ENCODE measurements at regions of chr19 and their contacts with region 1.

Region 1: DNA sequence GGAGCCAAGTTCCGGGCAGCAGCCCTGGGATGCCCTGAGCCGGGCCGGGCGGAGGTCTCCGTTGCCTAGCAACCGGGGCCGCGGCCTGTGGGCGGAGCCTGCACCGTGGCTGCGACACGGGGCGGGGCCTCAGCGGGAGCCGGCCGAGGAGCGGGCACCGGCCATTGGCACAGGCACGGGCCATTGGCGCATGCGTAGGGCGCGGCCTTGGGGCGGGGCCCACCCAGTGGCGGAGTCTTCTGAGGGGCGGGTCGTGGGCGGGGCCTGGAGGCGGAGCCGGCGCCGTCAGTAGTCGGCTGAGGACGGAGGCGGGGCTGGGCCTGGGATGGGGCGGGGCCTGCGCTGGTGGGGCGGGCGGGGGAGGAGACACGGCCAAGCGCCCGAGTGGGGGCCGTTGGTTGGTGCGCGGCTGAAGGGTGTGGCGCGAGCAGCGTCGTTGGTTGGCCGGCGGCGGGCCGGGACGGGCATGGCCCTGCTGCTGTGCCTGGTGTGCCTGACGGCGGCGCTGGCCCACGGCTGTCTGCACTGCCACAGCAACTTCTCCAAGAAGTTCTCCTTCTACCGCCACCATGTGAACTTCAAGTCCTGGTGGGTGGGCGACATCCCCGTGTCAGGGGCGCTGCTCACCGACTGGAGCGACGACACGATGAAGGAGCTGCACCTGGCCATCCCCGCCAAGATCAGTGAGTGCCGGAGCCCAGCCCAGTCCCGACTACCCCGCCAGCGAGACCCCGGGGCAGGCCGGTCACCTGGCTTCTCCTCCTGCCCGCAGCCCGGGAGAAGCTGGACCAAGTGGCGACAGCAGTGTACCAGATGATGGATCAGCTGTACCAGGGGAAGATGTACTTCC is at the start of gene IZUMO4:
- DNase-seq: peak; percentile 100
- ATAC-seq: peak; percentile 85
- H3K4me3 Mint-ChIP-seq: peak within 1 kb of the TSS; percentile 98
- H3K27ac Mint-ChIP-seq: peak within 1 kb of the TSS; percentile 94
- H3K4me1 Mint-ChIP-seq: peaks cover 35% of the 10 kb centered on the region
- H3K27me3 Mint-ChIP-seq: no peaks in the 10 kb centered on the region
- total RNA-seq, gene IZUMO4: 15.2 to 16.6 TPM

Region 2: DNA sequence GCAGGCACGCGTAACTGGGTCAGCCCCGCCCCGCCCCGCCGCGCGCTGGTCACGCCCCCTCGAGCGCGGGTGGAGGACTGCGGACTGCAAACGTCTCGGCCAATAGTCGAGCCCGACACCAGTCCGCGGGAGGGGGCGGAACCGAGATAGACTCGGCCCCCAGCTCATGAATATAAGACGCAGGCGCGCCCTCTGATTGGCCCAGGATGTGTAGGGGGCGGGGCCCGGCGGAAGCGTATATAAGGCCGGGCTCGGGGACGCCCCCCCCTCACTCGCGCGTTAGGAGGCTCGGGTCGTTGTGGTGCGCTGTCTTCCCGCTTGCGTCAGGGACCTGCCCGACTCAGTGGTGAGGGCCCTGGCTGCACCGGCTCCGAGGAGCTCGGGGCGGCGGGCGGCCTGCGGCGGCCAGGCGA is 827.6 kb before region 1 on chr19 and contains the start of gene CIRBP:
- CTCF ChIA-PET with region 1: no interaction called
- POLR2A ChIA-PET with region 1: no interaction called
- intact Hi-C with region 1: loop called in 1 of 2 experiments (anchors 10 kb)
- DNase-seq: peak; percentile 100
- ATAC-seq: peak; percentile 87
- H3K4me3 Mint-ChIP-seq: peak within 1 kb of the TSS; percentile 84
- H3K27ac Mint-ChIP-seq: peak within 1 kb of the TSS; percentile 87
- H3K4me1 Mint-ChIP-seq: peaks cover 66% of the 10 kb centered on the region
- H3K27me3 Mint-ChIP-seq: no peaks in the 10 kb centered on the region
- total RNA-seq, gene CIRBP: 123 to 188 TPM

Region 3: DNA sequence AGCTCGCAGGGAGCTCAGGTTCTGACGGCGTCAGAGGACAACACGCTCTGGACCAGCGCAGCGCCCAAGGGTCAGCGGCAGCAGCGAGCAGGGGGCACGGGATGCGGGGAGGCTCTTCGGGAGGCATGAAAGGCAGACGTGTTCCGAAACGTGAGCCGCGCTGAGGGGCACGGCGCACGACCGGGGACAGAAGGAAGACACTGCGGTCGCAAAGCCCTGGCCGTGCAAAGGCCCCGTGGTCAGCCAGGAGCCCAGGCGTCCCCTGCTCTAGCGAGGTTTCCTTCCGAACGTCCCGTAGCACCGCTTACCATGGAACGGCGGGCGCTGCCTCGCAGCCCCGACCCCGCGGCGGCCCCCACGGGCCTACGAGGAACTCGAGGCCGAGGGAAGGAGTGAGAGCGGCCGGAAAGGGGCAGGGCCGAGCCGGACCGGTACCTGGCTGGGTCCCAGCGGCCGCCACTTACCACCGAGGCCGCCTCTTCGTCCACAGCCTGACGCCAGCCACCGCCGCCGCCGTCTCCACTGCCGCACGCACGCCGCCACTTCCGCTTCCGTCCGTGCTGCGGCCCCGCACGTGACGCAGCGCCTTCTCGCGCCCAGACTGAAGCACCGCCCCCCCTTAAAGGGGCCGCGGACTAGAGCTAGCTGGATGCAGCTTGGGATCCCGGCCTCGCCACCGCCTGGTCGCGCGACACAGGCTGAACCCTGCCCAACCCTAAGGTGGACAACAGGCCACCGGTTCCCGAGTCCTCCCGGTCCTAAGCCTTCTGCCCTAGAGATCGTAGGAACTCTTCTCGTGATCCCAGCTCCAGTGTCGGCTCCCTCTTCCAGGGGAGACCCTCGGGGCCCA is 220.8 kb before region 1 on chr19:
- CTCF ChIA-PET with region 1: no interaction called
- POLR2A ChIA-PET with region 1: no interaction called
- intact Hi-C with region 1: loop called in 1 of 2 experiments (anchors 1 kb)
- DNase-seq: peak; percentile 95
- ATAC-seq: peak; percentile 96
- H3K4me3 Mint-ChIP-seq: peak overlapping the region; percentile 92
- H3K27ac Mint-ChIP-seq: peak overlapping the region; percentile 97
- H3K4me1 Mint-ChIP-seq: peaks cover 20% of the 10 kb centered on the region
- H3K27me3 Mint-ChIP-seq: no peaks in the 10 kb centered on the region

Region 4: DNA sequence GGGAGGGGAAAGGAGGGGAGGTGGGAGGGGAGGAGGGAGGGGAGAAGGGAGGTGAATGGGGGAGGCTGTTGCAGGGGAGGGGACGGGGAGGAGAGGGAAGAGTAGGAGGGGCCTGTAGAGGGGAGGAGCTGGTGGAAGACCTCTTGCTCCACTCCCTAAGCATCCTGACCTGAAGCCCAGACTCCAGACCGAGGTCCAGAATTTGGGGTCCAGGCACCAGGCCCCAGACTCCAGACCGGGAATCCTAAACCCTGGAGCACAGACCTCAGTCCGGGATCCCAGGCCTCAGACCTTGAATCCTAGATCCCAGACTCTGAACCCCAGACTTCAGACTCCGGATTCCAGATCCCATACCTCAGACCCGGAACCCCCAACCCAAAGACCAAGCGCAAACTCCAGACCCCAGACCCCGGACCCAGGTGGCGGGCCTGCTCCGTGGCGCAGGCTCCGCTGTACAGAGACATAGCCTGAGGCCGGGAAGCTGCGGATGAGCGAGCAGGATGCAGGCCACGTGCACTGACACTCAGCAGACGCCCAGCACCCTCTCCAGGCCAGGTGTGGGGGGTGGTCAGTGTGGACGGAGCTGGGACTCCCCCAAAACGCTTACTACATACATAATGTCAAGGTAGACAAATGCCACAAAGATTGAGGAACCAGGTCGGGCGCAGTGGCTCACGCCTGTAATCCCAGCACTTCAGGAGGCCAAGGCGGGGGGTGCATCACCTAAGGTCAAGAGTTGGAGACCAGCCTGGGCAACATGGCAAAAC is 80.5 kb before region 1 on chr19:
- CTCF ChIA-PET with region 1: interaction called, 17 read pairs
- POLR2A ChIA-PET with region 1: no interaction called
- intact Hi-C with region 1: loop called (anchors 1 kb)
- DNase-seq: peak; percentile 85
- ATAC-seq: peak; percentile 77
- H3K4me3 Mint-ChIP-seq: peak overlapping the region; percentile 66
- H3K27ac Mint-ChIP-seq: peak overlapping the region; percentile 58
- H3K4me1 Mint-ChIP-seq: peaks cover 21% of the 10 kb centered on the region
- H3K27me3 Mint-ChIP-seq: no peaks in the 10 kb centered on the region

Region 5: GRCh38 chr19:2061495-2062381 is 35.0 kb before region 1 on chr19:
- CTCF ChIA-PET with region 1: interaction called, 3 read pairs
- POLR2A ChIA-PET with region 1: interaction called, 3 read pairs
- intact Hi-C with region 1: loop called (anchors 1 kb)
- DNase-seq: peak; percentile 100
- ATAC-seq: peak; percentile 91
- H3K4me3 Mint-ChIP-seq: peak overlapping the region; percentile 88
- H3K27ac Mint-ChIP-seq: peak overlapping the region; percentile 92
- H3K4me1 Mint-ChIP-seq: peaks cover 37% of the 10 kb centered on the region
- H3K27me3 Mint-ChIP-seq: no peaks in the 10 kb centered on the region

Region 6: GRCh38 chr19:2269244-2269947 is 172.7 kb after region 1 on chr19:
- CTCF ChIA-PET with region 1: interaction called, 3 read pairs
- POLR2A ChIA-PET with region 1: no interaction called
- intact Hi-C with region 1: loop called in 1 of 2 experiments (anchors 1 kb)
- DNase-seq: peak; percentile 99
- ATAC-seq: peak; percentile 81
- H3K4me3 Mint-ChIP-seq: peak overlapping the region; percentile 89
- H3K27ac Mint-ChIP-seq: peak overlapping the region; percentile 88
- H3K4me1 Mint-ChIP-seq: peaks cover 38% of the 10 kb centered on the region
- H3K27me3 Mint-ChIP-seq: no peaks in the 10 kb centered on the region

Region 7: GRCh38 chr19:2282062-2282861 is 185.6 kb after region 1 on chr19 and contains the start of gene PEAK3:
- CTCF ChIA-PET with region 1: no interaction called
- POLR2A ChIA-PET with region 1: no interaction called
- intact Hi-C with region 1: no loop called
- DNase-seq: peak; percentile 56
- ATAC-seq: peak; percentile 40
- H3K4me3 Mint-ChIP-seq: no peak within 1 kb of the TSS
- H3K27ac Mint-ChIP-seq: no peak within 1 kb of the TSS
- H3K4me1 Mint-ChIP-seq: peaks cover 12% of the 10 kb centered on the region
- H3K27me3 Mint-ChIP-seq: no peaks in the 10 kb centered on the region
- total RNA-seq, gene PEAK3: not detected

Region 8: DNA sequence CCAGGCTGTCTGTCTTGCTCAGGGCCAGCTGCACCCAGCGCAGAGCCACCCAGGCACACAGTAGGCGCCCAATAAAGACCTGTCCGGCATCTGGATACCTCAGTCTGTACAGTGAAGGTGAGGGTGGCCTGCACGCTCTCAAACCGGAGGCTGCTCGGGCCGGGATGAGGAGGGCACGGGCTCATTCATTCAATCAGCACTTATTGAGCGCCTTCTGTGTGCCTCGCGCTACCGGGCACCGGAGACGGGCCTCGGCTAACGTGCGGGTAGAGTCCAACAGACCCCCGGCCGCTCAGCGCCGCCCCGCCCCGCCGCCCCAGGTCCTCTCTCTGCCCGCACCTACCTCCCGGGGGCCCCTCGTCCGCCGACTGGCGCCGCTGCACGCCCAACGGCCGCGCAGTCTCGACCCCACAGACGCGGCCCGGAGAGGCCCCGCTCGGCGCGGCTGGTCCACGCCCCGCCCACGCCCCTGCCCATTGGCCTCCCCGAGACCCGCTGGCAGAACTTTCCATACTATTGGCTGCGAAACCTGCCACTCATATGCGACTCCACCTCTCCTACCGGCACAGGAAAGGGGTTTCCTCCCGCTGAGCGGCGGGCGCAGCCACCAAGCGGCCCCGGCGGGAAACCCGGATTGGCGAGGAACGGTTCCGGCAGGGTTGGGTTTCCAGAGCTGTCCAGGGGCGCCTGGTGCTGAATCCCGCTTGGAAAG is 643.1 kb after region 1 on chr19 and contains the start of gene SLC39A3:
- CTCF ChIA-PET with region 1: no interaction called
- POLR2A ChIA-PET with region 1: no interaction called
- intact Hi-C with region 1: loop called in 1 of 2 experiments (anchors 1 kb)
- DNase-seq: peak; percentile 99
- ATAC-seq: peak; percentile 100
- H3K4me3 Mint-ChIP-seq: peak within 1 kb of the TSS; percentile 95
- H3K27ac Mint-ChIP-seq: peak within 1 kb of the TSS; percentile 70
- H3K4me1 Mint-ChIP-seq: peaks cover 14% of the 10 kb centered on the region
- H3K27me3 Mint-ChIP-seq: peaks cover 8% of the 10 kb centered on the region
- total RNA-seq, gene SLC39A3: 26.6 to 46.0 TPM

Region 9: DNA sequence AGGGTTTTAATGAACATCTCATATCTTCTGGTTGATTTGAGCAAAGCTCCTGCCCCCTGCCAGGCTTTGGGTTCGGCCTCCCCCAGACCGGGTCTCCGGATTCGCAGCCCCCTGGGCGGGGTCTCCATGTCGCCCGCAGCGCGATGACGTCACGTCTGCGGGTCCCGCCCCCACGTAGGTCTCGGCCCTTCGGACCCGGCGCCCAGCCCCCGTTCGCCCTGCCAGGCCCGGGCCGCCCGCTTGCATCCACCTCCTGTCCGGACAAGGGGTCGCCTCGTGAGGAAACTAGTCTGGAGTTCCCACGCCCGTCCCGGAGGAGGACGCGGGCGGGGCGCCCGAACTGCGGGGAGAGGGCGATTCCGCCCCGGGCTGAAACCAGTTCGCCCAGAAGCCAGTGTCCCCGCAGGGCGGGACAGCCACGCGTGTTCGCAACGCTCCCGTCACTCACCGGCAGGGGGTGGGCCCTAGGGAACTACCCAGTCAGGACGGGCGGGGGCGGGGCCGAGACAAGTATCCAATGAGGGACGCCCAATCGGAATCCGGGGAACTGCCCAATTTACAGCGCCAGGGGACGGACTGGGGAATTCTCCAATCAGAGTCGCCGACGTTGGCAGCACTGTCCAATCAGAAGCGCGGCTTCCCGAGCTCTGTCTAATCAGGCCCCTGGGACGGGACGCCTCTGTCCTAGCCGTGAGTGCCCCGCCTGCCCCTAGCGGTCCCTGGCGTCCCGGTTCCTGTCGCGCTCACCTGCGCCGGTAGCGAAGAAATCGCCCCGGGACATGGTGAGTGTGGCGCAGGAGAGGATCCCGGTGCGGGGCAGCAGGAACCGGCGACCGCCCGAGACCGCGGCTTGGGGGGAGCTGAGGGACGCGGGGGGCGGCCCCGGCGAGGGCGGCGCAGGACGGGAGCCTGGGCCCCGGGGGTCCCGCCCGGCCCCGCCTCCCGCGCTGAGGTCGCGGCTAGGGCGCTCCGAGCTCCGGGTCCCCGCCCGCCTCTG is 744.4 kb after region 1 on chr19 and contains the start of gene ZNF555:
- CTCF ChIA-PET with region 1: no interaction called
- POLR2A ChIA-PET with region 1: no interaction called
- intact Hi-C with region 1: no loop called
- DNase-seq: peak; percentile 99
- ATAC-seq: peak; percentile 100
- H3K4me3 Mint-ChIP-seq: peak within 1 kb of the TSS; percentile 77
- H3K27ac Mint-ChIP-seq: peak within 1 kb of the TSS; percentile 55
- H3K4me1 Mint-ChIP-seq: peaks cover 11% of the 10 kb centered on the region
- H3K27me3 Mint-ChIP-seq: no peaks in the 10 kb centered on the region
- total RNA-seq, gene ZNF555: 1.9 TPM

Measured in activated CD4-positive, alpha-beta T cell treated with anti-CD3 and anti-CD28 coated beads for 36 hours (primary cell).